ENCODE measurements at regions of chr5 and their contacts with region 1.

Region 1: GRCh38 chr5:442335-443238 is at the start of gene EXOC3:
- DNase-seq: peak; percentile 60 to 83 (median 67)
- ATAC-seq: peak; percentile 87
- H3K4me3 ChIP-seq: peak within 1 kb of the TSS; percentile 88
- H3K4me3 Mint-ChIP-seq: peak within 1 kb of the TSS; percentile 89 to 98 (median 96)
- H3K27ac ChIP-seq: peak within 1 kb of the TSS; percentile 87
- H3K27ac Mint-ChIP-seq: peak within 1 kb of the TSS; percentile 88 to 98 (median 94)
- H3K4me1 ChIP-seq: peaks cover 12 to 18% of the 10 kb centered on the region in 2 donors
- H3K4me1 Mint-ChIP-seq: peaks cover 24 to 44% (median 32%) of the 10 kb centered on the region in 7 donors
- H3K27me3 ChIP-seq: no peaks in the 10 kb centered on the region
- H3K27me3 Mint-ChIP-seq: peaks cover 0 to 3% (median 0%) of the 10 kb centered on the region in 5 donors
- total RNA-seq, gene EXOC3: 79.1 to 105 (median 89.8) TPM

Region 2: DNA sequence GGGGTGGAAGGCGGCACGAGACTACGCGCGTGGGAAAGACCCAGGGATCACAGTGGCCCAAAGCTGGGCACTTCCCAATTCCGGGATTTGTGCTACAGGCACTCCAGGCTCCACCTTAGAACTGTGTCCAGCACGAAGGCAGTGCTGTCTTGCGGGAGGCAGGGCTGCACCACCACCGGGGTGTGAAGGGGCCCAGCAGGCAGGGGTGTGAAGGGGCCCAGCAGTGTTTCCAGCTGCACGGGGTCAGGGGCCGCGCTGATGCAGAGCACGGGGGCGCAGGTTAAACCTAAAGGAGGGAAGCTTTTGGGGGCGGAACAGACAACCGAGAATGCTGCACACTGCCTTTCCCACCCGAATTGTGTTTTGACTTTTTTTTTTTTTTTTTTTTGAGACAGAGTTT is 172.2 kb before region 1 on chr5:
- CTCF ChIA-PET with region 1: no interaction called
- POLR2A ChIA-PET with region 1: no interaction called
- intact Hi-C with region 1: loop called (anchors 5 kb)
- DNase-seq: no peak
- ATAC-seq: no peak
- H3K4me3 ChIP-seq: no peak overlapping the region
- H3K4me3 Mint-ChIP-seq: peak overlapping the region; percentile 72 to 95 (median 91)
- H3K27ac ChIP-seq: no peak overlapping the region
- H3K27ac Mint-ChIP-seq: peak overlapping the region in 8 of 9 donors; percentile 59 to 99 (median 86)
- H3K4me1 ChIP-seq: peaks cover 0 to 7% of the 10 kb centered on the region in 2 donors
- H3K4me1 Mint-ChIP-seq: peaks cover 20 to 41% (median 39%) of the 10 kb centered on the region in 7 donors
- H3K27me3 ChIP-seq: no peaks in the 10 kb centered on the region
- H3K27me3 Mint-ChIP-seq: no peaks in the 10 kb centered on the region

Region 3: DNA sequence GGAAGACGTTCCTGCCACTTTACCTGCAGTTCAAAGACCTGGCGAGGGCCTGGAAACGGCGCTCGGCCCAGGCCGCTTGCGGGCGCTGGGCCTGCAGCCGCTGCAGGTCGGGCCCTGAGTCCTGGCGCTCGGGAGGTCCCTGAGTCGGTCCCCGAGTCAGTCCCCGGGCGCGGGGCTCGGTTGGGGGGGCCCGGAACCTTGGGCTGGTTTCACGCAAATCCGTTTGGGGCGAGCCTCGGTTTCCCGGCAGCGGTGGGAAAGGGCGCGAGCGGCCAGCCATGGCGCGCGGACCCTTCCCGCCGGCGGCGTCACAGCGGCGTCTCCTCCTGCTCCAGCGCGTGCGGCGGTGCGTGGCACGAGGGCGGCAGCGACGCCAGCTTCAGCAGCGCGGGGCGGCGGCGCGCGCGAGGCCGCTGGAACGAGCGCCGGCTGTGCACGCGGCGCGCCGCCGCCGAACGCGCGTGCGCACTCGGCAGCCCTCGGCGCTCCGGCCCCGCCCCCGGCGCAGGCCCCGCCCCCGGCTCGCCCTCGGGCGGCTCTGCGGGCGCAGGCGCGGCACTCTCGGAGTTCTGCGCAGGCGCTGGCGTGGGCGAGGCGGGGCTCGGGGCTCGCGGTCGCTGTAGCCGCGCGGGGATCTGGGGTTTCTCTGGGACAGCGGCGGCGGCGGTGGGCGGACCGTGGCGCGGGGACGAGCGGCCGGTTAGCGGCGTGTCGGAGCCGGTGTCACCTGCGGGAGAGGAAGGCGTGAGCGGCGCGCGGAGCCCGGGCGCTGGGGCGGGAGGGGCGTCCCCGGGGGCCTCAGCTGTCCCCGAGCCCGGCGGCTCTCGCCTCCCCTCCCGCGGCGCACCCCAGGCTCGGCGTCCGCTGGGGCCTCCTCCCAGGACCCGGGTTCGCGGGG is 30.3 kb after region 1 on chr5:
- CTCF ChIA-PET with region 1: interaction called, 10 read pairs
- POLR2A ChIA-PET with region 1: interaction called, 5 read pairs
- intact Hi-C with region 1: loop called (anchors 1 to 2 kb)
- DNase-seq: peak; percentile 82 to 97 (median 90)
- ATAC-seq: peak; percentile 89
- H3K4me3 ChIP-seq: peak overlapping the region; percentile 82
- H3K4me3 Mint-ChIP-seq: peak overlapping the region; percentile 80 to 91 (median 84)
- H3K27ac ChIP-seq: peak overlapping the region; percentile 95
- H3K27ac Mint-ChIP-seq: peak overlapping the region in 6 of 9 donors; percentile 15 to 89 (median 84)
- H3K4me1 ChIP-seq: peaks cover 14 to 18% of the 10 kb centered on the region in 2 donors
- H3K4me1 Mint-ChIP-seq: peaks cover 13 to 22% (median 19%) of the 10 kb centered on the region in 7 donors
- H3K27me3 ChIP-seq: peaks cover 0 to 3% of the 10 kb centered on the region in 2 donors
- H3K27me3 Mint-ChIP-seq: peaks cover 0 to 10% (median 8%) of the 10 kb centered on the region in 5 donors

Region 4: GRCh38 chr5:611721-612486 is 169.3 kb after region 1 on chr5 and contains the start of gene CEP72:
- CTCF ChIA-PET with region 1: no interaction called
- POLR2A ChIA-PET with region 1: no interaction called
- intact Hi-C with region 1: loop called (anchors 1 to 2 kb)
- DNase-seq: peak; percentile 81 to 96 (median 88)
- ATAC-seq: peak; percentile 98
- H3K4me3 ChIP-seq: peak within 1 kb of the TSS; percentile 59
- H3K4me3 Mint-ChIP-seq: peak within 1 kb of the TSS; percentile 84 to 99 (median 95)
- H3K27ac ChIP-seq: peak within 1 kb of the TSS; percentile 75
- H3K27ac Mint-ChIP-seq: peak within 1 kb of the TSS; percentile 76 to 96 (median 85)
- H3K4me1 ChIP-seq: peaks cover 5 to 7% of the 10 kb centered on the region in 2 donors
- H3K4me1 Mint-ChIP-seq: peaks cover 36 to 60% (median 56%) of the 10 kb centered on the region in 7 donors
- H3K27me3 ChIP-seq: no peaks in the 10 kb centered on the region
- H3K27me3 Mint-ChIP-seq: peaks cover 0 to 14% (median 8%) of the 10 kb centered on the region in 5 donors
- total RNA-seq, gene CEP72: 13.4 to 33.8 (median 22.7) TPM

Measured in naive thymus-derived CD4-positive, alpha-beta T cell (primary cell).